Mammary epithelial cell (primary cell): ENCODE measurements at regions of chr14 and their contacts with region 1.

Region 1: GRCh38 chr14:60091550-60092530 is at the start of gene PCNX4:
- DNase-seq: peak; percentile 99
- H3K4me3 ChIP-seq: peak within 1 kb of the TSS; percentile 66 to 86 (median 75)
- H3K27ac ChIP-seq: peak within 1 kb of the TSS; percentile 99
- H3K4me1 ChIP-seq: peaks cover 24% of the 10 kb centered on the region
- H3K27me3 ChIP-seq: no peaks in the 10 kb centered on the region
- CTCF ChIP-seq: no peak
- total RNA-seq, gene PCNX4: 54.5 to 104 TPM

Region 2: GRCh38 chr14:59483900-59484638 is 607.8 kb before region 1 on chr14 and contains the starts of genes JKAMP and L3HYPDH:
- CTCF ChIA-PET with region 1: no interaction called
- dilution Hi-C with region 1: no loop called
- in situ Hi-C with region 1: no loop called
- intact Hi-C with region 1: loop called (anchors 10 kb)
- DNase-seq: peak; percentile 92
- H3K4me3 ChIP-seq: peak within 1 kb of the TSS; percentile 78 to 96 (median 93)
- H3K27ac ChIP-seq: peak within 1 kb of the TSS; percentile 77
- H3K4me1 ChIP-seq: peaks cover 32% of the 10 kb centered on the region
- H3K27me3 ChIP-seq: no peaks in the 10 kb centered on the region
- CTCF ChIP-seq: peak in 1 of 2 donors; percentile 54
- total RNA-seq, gene JKAMP: 36.6 to 99.9 TPM
- total RNA-seq, gene L3HYPDH: 23.4 to 30.2 TPM

Region 3: GRCh38 chr14:60064491-60065072 is 27.3 kb before region 1 on chr14:
- CTCF ChIA-PET with region 1: no interaction called
- dilution Hi-C with region 1: no loop called
- in situ Hi-C with region 1: no loop called
- intact Hi-C with region 1: loop called (anchors 2 kb)
- DNase-seq: peak; percentile 6
- H3K4me3 ChIP-seq: no peak overlapping the region
- H3K27ac ChIP-seq: no peak overlapping the region
- H3K4me1 ChIP-seq: peaks cover 7% of the 10 kb centered on the region
- H3K27me3 ChIP-seq: no peaks in the 10 kb centered on the region
- CTCF ChIP-seq: peak; percentile 60 to 62

Region 4: DNA sequence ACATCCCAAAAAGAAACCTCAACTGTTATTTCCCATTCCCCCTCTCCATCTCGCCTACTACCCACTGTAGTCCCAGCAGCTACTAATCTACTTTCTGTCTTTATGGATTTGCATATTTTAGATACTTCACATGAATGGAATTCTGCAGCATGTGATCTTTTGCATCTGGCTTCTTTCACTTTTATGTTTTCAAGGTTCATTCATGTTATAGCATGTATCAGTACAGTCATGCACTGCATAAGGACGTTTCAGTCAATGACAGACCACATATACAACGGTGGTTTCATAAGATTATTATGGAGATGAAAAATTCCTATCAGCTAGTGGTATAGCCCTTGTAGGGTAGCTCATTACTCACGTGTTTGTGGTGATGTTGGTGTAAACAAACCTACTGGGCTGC is 24.3 kb after region 1 on chr14:
- CTCF ChIA-PET with region 1: no interaction called
- dilution Hi-C with region 1: no loop called
- in situ Hi-C with region 1: no loop called
- intact Hi-C with region 1: loop called (anchors 1 kb)
- DNase-seq: peak; percentile 78
- H3K4me3 ChIP-seq: no peak overlapping the region
- H3K27ac ChIP-seq: peak overlapping the region; percentile 27
- H3K4me1 ChIP-seq: peaks cover 3% of the 10 kb centered on the region
- H3K27me3 ChIP-seq: no peaks in the 10 kb centered on the region
- CTCF ChIP-seq: no peak

Region 5: DNA sequence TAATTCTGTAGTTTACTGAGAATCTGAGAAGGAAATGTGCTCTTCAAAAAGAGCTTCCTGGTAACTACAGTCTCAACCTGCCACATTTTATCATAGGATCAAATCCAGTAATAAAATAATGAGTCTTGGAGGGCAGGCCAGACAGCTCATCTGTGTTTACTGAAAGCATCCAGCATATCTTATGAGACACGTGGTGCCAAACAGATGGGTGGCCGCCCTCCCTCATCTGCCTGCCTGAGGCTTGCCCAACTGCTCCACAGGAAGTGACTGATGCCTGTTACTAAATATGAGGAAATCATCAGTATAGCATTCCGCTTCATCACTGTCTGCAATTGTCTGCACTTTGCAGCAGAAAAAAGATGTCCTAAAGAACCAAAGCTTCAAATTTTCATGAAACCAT is 59.9 kb after region 1 on chr14:
- CTCF ChIA-PET with region 1: no interaction called
- dilution Hi-C with region 1: no loop called
- in situ Hi-C with region 1: no loop called
- intact Hi-C with region 1: loop called (anchors 1 kb)
- DNase-seq: peak; percentile 84
- H3K4me3 ChIP-seq: no peak overlapping the region
- H3K27ac ChIP-seq: peak overlapping the region; percentile 65
- H3K4me1 ChIP-seq: peaks cover 20% of the 10 kb centered on the region
- H3K27me3 ChIP-seq: no peaks in the 10 kb centered on the region
- CTCF ChIP-seq: no peak

Region 6: GRCh38 chr14:60164712-60165546 is 73.1 kb after region 1 on chr14 and contains the start of gene DHRS7:
- CTCF ChIA-PET with region 1: no interaction called
- dilution Hi-C with region 1: no loop called
- in situ Hi-C with region 1: loop called in 1 of 2 experiments (anchors 5 kb)
- intact Hi-C with region 1: loop called (anchors 1 kb)
- DNase-seq: peak; percentile 70
- H3K4me3 ChIP-seq: peak within 1 kb of the TSS; percentile 87 to 100 (median 90)
- H3K27ac ChIP-seq: peak within 1 kb of the TSS; percentile 97
- H3K4me1 ChIP-seq: peaks cover 8% of the 10 kb centered on the region
- H3K27me3 ChIP-seq: no peaks in the 10 kb centered on the region
- CTCF ChIP-seq: peak; percentile 6 to 42
- total RNA-seq, gene DHRS7: 73.0 to 85.0 TPM

Region 7: DNA sequence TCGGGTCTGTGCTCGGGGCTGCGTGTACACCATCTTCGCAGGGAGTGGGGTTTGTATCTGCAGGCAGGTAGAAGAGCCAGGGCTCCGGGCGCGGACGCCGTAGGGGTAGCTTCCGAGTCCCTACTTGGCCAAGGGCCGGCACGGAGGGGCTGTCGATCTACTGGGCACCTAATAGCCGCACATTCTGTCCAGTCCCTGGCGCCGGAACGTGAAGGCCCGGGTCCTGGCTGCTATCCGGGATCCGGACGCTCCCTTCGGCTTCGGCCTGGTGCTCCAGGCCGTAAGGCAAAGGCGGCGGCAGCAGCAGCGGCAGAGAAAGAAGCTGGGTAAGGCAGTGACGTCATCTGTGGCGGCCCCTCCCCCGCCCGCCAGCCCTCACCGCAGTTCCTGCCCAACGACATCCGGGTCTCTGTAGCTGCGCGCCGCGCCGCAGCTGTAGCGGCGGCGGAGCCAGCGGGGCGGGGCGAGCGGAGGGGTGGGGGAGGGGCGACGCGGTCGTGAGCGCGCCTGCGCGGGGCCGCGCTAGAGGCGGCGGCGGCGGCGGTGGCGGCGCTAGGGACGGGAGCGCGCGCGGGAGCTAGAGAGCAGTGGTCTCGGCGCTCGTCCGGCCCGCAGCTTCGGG is 157.0 kb after region 1 on chr14 and contains the start of gene PPM1A:
- CTCF ChIA-PET with region 1: no interaction called
- dilution Hi-C with region 1: no loop called
- in situ Hi-C with region 1: no loop called
- intact Hi-C with region 1: loop called (anchors 2 kb)
- DNase-seq: peak; percentile 90
- H3K4me3 ChIP-seq: peak within 1 kb of the TSS; percentile 72 to 84 (median 77)
- H3K27ac ChIP-seq: peak within 1 kb of the TSS; percentile 92
- H3K4me1 ChIP-seq: peaks cover 29% of the 10 kb centered on the region
- H3K27me3 ChIP-seq: no peaks in the 10 kb centered on the region
- CTCF ChIP-seq: no peak
- total RNA-seq, gene PPM1A: 26.3 to 40.5 TPM

Region 8: GRCh38 chr14:60590991-60591414 is 499.2 kb after region 1 on chr14:
- CTCF ChIA-PET with region 1: no interaction called
- dilution Hi-C with region 1: no loop called
- in situ Hi-C with region 1: no loop called
- intact Hi-C with region 1: no loop called
- DNase-seq: no peak
- H3K4me3 ChIP-seq: no peak overlapping the region
- H3K27ac ChIP-seq: no peak overlapping the region
- H3K4me1 ChIP-seq: no peaks in the 10 kb centered on the region
- H3K27me3 ChIP-seq: peaks cover 4% of the 10 kb centered on the region
- CTCF ChIP-seq: no peak